Sigmoid colon (tissue), 7 donors: ENCODE measurements at regions of chr2 and their contacts with region 1.

Region 1: GRCh38 chr2:112054847-112055729 is at the start of gene TMEM87B:
- DNase-seq: peak; percentile 100
- H3K4me3 ChIP-seq: peak within 1 kb of the TSS; percentile 66 to 95 (median 76)
- H3K27ac ChIP-seq: peak within 1 kb of the TSS; percentile 92 to 99 (median 96)
- H3K4me1 ChIP-seq: peaks cover 0 to 28% (median 25%) of the 10 kb centered on the region in 4 donors
- H3K27me3 ChIP-seq: no peaks in the 10 kb centered on the region
- CTCF ChIP-seq: no peak
- EP300 ChIP-seq: peak in 1 of 4 donors; percentile 14
- POLR2A ChIP-seq: peak; percentile 45 to 74
- total RNA-seq, gene TMEM87B: 16.7 to 36.7 (median 20.5) TPM

Region 2: GRCh38 chr2:111120253-111121027 is 934.6 kb before region 1 on chr2 and contains the start of gene BCL2L11:
- intact Hi-C with region 1: loop called (anchors 10 kb)
- DNase-seq: peak; percentile 94
- H3K4me3 ChIP-seq: peak within 1 kb of the TSS; percentile 52 to 82 (median 76)
- H3K27ac ChIP-seq: peak within 1 kb of the TSS; percentile 60 to 75 (median 71)
- H3K4me1 ChIP-seq: peaks cover 0 to 59% (median 53%) of the 10 kb centered on the region in 4 donors
- H3K27me3 ChIP-seq: peaks cover 18 to 51% (median 40%) of the 10 kb centered on the region in 3 donors
- CTCF ChIP-seq: no peak
- EP300 ChIP-seq: no peak
- POLR2A ChIP-seq: no peak
- total RNA-seq, gene BCL2L11: 8.3 to 30.0 (median 19.6) TPM

Region 3: GRCh38 chr2:111135910-111136297 is 919.2 kb before region 1 on chr2:
- intact Hi-C with region 1: no loop called
- DNase-seq: no peak
- H3K4me3 ChIP-seq: no peak overlapping the region
- H3K27ac ChIP-seq: no peak overlapping the region
- H3K4me1 ChIP-seq: no peaks in the 10 kb centered on the region
- H3K27me3 ChIP-seq: no peaks in the 10 kb centered on the region
- CTCF ChIP-seq: no peak
- EP300 ChIP-seq: no peak
- POLR2A ChIP-seq: no peak

Region 4: GRCh38 chr2:111897924-111898702 is 157.0 kb before region 1 on chr2 and contains the start of gene MERTK:
- intact Hi-C with region 1: loop called (anchors 2 kb)
- DNase-seq: peak; percentile 95
- H3K4me3 ChIP-seq: peak within 1 kb of the TSS; percentile 70 to 80 (median 75)
- H3K27ac ChIP-seq: peak within 1 kb of the TSS; percentile 80 to 90 (median 88)
- H3K4me1 ChIP-seq: peaks cover 0 to 37% (median 23%) of the 10 kb centered on the region in 4 donors
- H3K27me3 ChIP-seq: no peaks in the 10 kb centered on the region
- CTCF ChIP-seq: peak; percentile 43 to 49 (median 46)
- EP300 ChIP-seq: no peak
- POLR2A ChIP-seq: peak in 1 of 2 donors; percentile 42
- total RNA-seq, gene MERTK: 14.4 to 31.6 (median 26.0) TPM

Region 5: GRCh38 chr2:112004253-112004645 is 50.8 kb before region 1 on chr2:
- intact Hi-C with region 1: no loop called
- DNase-seq: peak; percentile 78
- H3K4me3 ChIP-seq: no peak overlapping the region
- H3K27ac ChIP-seq: peak overlapping the region in 1 of 4 donors; percentile 50
- H3K4me1 ChIP-seq: no peaks in the 10 kb centered on the region
- H3K27me3 ChIP-seq: no peaks in the 10 kb centered on the region
- CTCF ChIP-seq: no peak
- EP300 ChIP-seq: no peak
- POLR2A ChIP-seq: no peak

Region 6: DNA sequence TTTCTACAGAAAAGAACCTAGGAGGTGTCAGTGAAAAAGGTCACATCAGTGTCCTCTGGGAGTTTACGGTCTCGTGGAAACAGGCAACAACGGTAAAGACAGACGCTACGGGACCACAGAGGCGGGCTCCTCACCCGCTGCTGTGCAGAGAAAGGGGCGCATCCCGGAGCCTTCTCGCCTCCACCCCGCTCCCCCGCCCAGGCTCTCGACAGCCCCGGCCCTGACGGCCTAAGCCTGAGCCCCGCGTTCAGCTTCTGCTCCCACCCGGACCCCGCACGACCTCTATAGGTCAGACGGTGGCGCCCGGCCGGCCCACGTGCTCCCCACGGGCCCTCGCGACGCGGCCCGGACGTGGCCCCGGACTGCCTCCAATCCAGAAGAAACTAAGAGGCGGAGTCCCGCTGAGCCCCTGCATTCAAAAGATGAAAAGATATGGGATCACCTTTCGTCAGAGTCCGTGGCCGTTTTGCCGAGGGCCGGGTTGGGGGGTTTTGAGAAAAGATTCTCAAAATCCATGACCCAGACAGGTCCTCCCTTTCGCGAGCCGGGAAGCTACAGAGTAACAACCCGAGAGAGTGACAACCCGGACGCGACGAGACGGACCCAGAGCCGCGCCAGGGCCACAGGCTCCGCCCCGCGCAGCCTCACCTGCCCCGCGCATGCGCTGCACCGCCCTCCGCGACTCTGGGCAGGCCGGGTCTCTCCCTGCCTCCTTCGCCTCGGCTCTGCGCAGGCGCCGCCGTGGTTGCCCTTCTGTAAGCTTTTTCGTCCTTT is 199.6 kb after region 1 on chr2 and contains the start of gene ZC3H8:
- intact Hi-C with region 1: loop called (anchors 5 kb)
- DNase-seq: peak; percentile 96
- H3K4me3 ChIP-seq: peak within 1 kb of the TSS; percentile 57 to 81 (median 66)
- H3K27ac ChIP-seq: peak within 1 kb of the TSS; percentile 80 to 85 (median 81)
- H3K4me1 ChIP-seq: peaks cover 0 to 15% (median 11%) of the 10 kb centered on the region in 4 donors
- H3K27me3 ChIP-seq: no peaks in the 10 kb centered on the region
- CTCF ChIP-seq: no peak
- EP300 ChIP-seq: no peak
- POLR2A ChIP-seq: peak; percentile 59 to 60
- total RNA-seq, gene ZC3H8: 2.7 to 22.2 (median 7.4) TPM

Region 7: GRCh38 chr2:112275306-112275886 is 220.3 kb after region 1 on chr2 and contains the start of gene ZC3H6:
- intact Hi-C with region 1: loop called (anchors 2 kb)
- DNase-seq: peak; percentile 99
- H3K4me3 ChIP-seq: peak within 1 kb of the TSS; percentile 68 to 97 (median 89)
- H3K27ac ChIP-seq: peak within 1 kb of the TSS; percentile 95 to 100 (median 99)
- H3K4me1 ChIP-seq: peaks cover 0 to 14% (median 6%) of the 10 kb centered on the region in 4 donors
- H3K27me3 ChIP-seq: no peaks in the 10 kb centered on the region
- CTCF ChIP-seq: peak in 1 of 4 experiments; percentile 36
- EP300 ChIP-seq: peak in 1 of 4 donors; percentile 13
- POLR2A ChIP-seq: peak; percentile 91 to 94
- total RNA-seq, gene ZC3H6: 13.2 to 27.1 (median 16.5) TPM

Region 8: DNA sequence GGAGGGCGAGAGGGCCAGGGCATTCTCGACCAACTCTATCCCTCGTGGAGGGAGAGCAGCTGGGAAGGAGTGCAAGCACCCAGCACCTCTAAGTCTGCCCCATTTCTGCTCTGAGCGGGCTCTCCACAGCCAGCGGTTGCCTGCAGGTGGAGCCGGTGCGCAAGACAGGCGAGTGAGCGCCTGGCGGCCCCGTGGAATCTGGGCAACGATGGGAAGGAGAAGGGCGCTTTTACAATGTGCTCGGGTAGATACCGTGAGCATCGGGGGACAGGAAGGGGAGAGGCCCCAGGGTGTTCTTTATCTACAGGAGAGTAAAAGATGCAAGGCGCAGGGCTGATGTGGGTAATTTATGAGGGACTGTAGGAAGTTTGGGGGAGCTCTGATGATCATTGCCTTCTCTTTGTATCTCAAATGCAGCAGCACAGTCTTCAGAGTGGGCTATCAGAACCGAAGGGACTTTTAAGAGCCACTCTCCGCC is 426.0 kb after region 1 on chr2:
- intact Hi-C with region 1: loop called (anchors 5 kb)
- DNase-seq: peak; percentile 88
- H3K4me3 ChIP-seq: peak overlapping the region; percentile 60 to 77 (median 72)
- H3K27ac ChIP-seq: peak overlapping the region; percentile 84 to 94 (median 88)
- H3K4me1 ChIP-seq: peaks cover 0 to 30% (median 22%) of the 10 kb centered on the region in 4 donors
- H3K27me3 ChIP-seq: no peaks in the 10 kb centered on the region
- CTCF ChIP-seq: peak; percentile 53 to 87 (median 65)
- EP300 ChIP-seq: no peak
- POLR2A ChIP-seq: no peak

Region 9: GRCh38 chr2:112584134-112584890 is 529.2 kb after region 1 on chr2 and contains the start of gene CHCHD5:
- intact Hi-C with region 1: loop called (anchors 5 kb)
- DNase-seq: peak; percentile 98
- H3K4me3 ChIP-seq: peak within 1 kb of the TSS; percentile 62 to 69 (median 66)
- H3K27ac ChIP-seq: peak within 1 kb of the TSS; percentile 85 to 94 (median 93)
- H3K4me1 ChIP-seq: peaks cover 0 to 25% (median 18%) of the 10 kb centered on the region in 4 donors
- H3K27me3 ChIP-seq: no peaks in the 10 kb centered on the region
- CTCF ChIP-seq: peak in 2 of 4 experiments; percentile 17 to 27
- EP300 ChIP-seq: peak in 2 of 4 donors; percentile 15 to 16
- POLR2A ChIP-seq: peak; percentile 18 to 36
- total RNA-seq, gene CHCHD5: 13.8 to 36.4 (median 25.3) TPM